IMR-90 (cell line): ENCODE measurements at regions of chr5 and their contacts with region 1.

Region 1: GRCh38 chr5:17216176-17216973 is 1.1 kb upstream of the BASP1 start:
- DNase-seq: peak; percentile 76
- ATAC-seq: peak; percentile 24
- H3K4me3 ChIP-seq: peak overlapping the region; percentile 49
- H3K27ac ChIP-seq: peak overlapping the region; percentile 27
- H3K4me1 ChIP-seq: peaks cover 3% of the 10 kb centered on the region
- H3K27me3 ChIP-seq: no peaks in the 10 kb centered on the region; the same call in 1 of the 2 replicates
- CTCF ChIP-seq: peak; percentile 88
- POLR2A ChIP-seq: no peak
- RAD21 ChIP-seq: peak; percentile 95

Region 2: GRCh38 chr5:17255471-17256021 is 39.2 kb after region 1 on chr5:
- CTCF ChIA-PET with region 1: no interaction called
- POLR2A ChIA-PET with region 1: no interaction called
- dilution Hi-C with region 1: no loop called
- in situ Hi-C with region 1: no loop called
- intact Hi-C with region 1: loop called (anchors 2 kb)
- DNase-seq: no peak
- ATAC-seq: no peak; the same call in 1 of the 2 replicates
- H3K4me3 ChIP-seq: no peak overlapping the region
- H3K27ac ChIP-seq: no peak overlapping the region
- H3K4me1 ChIP-seq: peaks cover 34% of the 10 kb centered on the region
- H3K27me3 ChIP-seq: no peaks in the 10 kb centered on the region
- CTCF ChIP-seq: no peak
- POLR2A ChIP-seq: no peak
- RAD21 ChIP-seq: no peak

Region 3: GRCh38 chr5:17379100-17379951 is 163.0 kb after region 1 on chr5:
- CTCF ChIA-PET with region 1: interaction called, 3 read pairs
- POLR2A ChIA-PET with region 1: no interaction called
- dilution Hi-C with region 1: no loop called
- in situ Hi-C with region 1: no loop called
- intact Hi-C with region 1: loop called (anchors 5 kb)
- DNase-seq: peak; percentile 21
- ATAC-seq: no peak
- H3K4me3 ChIP-seq: no peak overlapping the region
- H3K27ac ChIP-seq: peak overlapping the region; percentile 87; the same call in 1 of the 2 replicates
- H3K4me1 ChIP-seq: peaks cover 29% of the 10 kb centered on the region
- H3K27me3 ChIP-seq: no peaks in the 10 kb centered on the region
- CTCF ChIP-seq: no peak
- POLR2A ChIP-seq: no peak
- RAD21 ChIP-seq: no peak

Region 4: DNA sequence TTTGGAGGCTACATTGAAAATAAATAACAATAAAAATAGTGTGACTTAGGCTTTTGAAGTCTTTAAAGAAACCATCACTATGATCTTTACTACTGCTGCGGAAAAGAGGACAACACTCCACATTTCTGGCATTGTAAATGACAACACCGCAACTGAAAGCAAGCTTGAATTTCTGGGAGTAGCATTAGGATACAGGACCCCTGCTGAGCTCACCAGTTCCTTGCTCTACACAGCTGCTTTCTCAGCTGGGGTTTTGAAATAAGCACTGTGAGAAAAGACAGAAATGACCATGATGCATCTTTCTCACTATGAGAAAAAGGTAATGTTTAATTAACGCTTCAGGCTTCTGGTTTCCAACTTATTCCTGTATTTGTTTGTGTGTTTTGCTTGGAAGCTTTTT is 585.9 kb after region 1 on chr5:
- CTCF ChIA-PET with region 1: no interaction called
- POLR2A ChIA-PET with region 1: no interaction called
- dilution Hi-C with region 1: no loop called
- in situ Hi-C with region 1: no loop called
- intact Hi-C with region 1: loop called (anchors 10 kb)
- DNase-seq: no peak
- ATAC-seq: no peak
- H3K4me3 ChIP-seq: no peak overlapping the region
- H3K27ac ChIP-seq: no peak overlapping the region
- H3K4me1 ChIP-seq: no peaks in the 10 kb centered on the region
- H3K27me3 ChIP-seq: no peaks in the 10 kb centered on the region
- CTCF ChIP-seq: no peak
- POLR2A ChIP-seq: no peak
- RAD21 ChIP-seq: no peak

Region 5: GRCh38 chr5:17912794-17913193 is 696.4 kb after region 1 on chr5:
- CTCF ChIA-PET with region 1: no interaction called
- POLR2A ChIA-PET with region 1: no interaction called
- dilution Hi-C with region 1: no loop called
- in situ Hi-C with region 1: no loop called
- intact Hi-C with region 1: no loop called
- DNase-seq: no peak
- ATAC-seq: no peak
- H3K4me3 ChIP-seq: no peak overlapping the region
- H3K27ac ChIP-seq: no peak overlapping the region
- H3K4me1 ChIP-seq: no peaks in the 10 kb centered on the region
- H3K27me3 ChIP-seq: no peaks in the 10 kb centered on the region
- CTCF ChIP-seq: no peak
- POLR2A ChIP-seq: no peak
- RAD21 ChIP-seq: no peak

Region 6: DNA sequence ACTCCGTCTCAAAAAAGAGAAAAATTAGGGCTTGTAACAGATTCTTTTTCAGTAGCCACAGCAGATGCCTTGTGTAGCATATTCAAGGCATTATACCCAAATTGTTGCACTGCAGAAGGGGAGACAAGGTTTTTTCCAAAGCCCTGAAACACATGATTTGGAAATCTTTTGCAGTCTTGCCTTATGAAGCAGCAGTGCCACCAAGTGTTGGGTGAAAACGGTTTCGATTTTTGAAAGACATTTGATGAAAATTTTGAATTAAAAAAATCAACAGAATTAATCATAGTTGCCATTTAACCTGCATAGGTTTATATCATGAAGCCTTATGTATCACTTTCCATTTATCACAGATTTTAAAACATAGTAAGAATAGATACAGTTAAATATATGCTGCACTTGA is 897.3 kb after region 1 on chr5:
- CTCF ChIA-PET with region 1: interaction called, 3 read pairs
- POLR2A ChIA-PET with region 1: no interaction called
- dilution Hi-C with region 1: no loop called
- in situ Hi-C with region 1: loop called (anchors 10 kb)
- intact Hi-C with region 1: loop called (anchors 1 kb)
- DNase-seq: peak; percentile 12
- ATAC-seq: no peak
- H3K4me3 ChIP-seq: no peak overlapping the region
- H3K27ac ChIP-seq: no peak overlapping the region
- H3K4me1 ChIP-seq: no peaks in the 10 kb centered on the region
- H3K27me3 ChIP-seq: no peaks in the 10 kb centered on the region
- CTCF ChIP-seq: peak; percentile 48
- POLR2A ChIP-seq: no peak
- RAD21 ChIP-seq: peak; percentile 56

Region 7: DNA sequence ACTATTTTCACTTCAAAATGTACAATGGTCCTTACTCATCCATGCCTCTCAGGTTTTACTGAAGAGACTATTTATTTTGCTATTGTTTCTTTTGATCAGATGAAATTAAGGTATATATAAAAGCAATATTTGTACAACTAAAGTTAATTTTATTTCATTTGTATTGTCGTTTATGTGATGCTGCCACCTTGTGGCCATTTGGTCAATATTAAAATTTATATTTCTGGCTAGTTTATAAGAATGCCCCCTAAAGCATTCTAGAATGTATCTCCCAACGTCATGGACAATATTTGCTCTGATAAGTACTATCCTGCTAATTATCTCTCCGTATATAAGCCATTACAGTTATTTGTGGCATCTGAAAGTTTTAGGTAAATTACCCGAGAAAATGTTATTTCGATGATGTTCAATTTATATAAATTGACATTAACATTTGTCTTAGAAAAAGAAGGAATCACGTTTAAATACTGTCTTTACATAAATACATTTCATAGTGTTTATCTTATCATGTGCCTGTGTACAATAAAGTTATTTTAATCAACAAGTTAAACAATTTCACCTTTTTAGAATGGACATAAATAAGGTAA is 1097.9 kb after region 1 on chr5:
- CTCF ChIA-PET with region 1: interaction called, 14 read pairs
- POLR2A ChIA-PET with region 1: no interaction called
- dilution Hi-C with region 1: no loop called
- in situ Hi-C with region 1: no loop called
- intact Hi-C with region 1: loop called (anchors 2 kb)
- DNase-seq: peak; percentile 20
- ATAC-seq: no peak
- H3K4me3 ChIP-seq: no peak overlapping the region
- H3K27ac ChIP-seq: no peak overlapping the region
- H3K4me1 ChIP-seq: no peaks in the 10 kb centered on the region
- H3K27me3 ChIP-seq: no peaks in the 10 kb centered on the region
- CTCF ChIP-seq: peak; percentile 48
- POLR2A ChIP-seq: no peak
- RAD21 ChIP-seq: peak; percentile 31; the same call in 1 of the 2 replicates